Activated T-helper 2 cell treated with anti-CD3 and anti-CD28 coated beads, Interferon-gamma antibody, Interleukin-2, Interleukin-4, amounts not matched to agents 10 μg/mL and 5 μg/mL and 100 μg/mL, durations not matched to agents 14 hours and 24 hours and 36 hours (primary cell): ENCODE measurements at regions of chr10 and their contacts with region 1.

Region 1: DNA sequence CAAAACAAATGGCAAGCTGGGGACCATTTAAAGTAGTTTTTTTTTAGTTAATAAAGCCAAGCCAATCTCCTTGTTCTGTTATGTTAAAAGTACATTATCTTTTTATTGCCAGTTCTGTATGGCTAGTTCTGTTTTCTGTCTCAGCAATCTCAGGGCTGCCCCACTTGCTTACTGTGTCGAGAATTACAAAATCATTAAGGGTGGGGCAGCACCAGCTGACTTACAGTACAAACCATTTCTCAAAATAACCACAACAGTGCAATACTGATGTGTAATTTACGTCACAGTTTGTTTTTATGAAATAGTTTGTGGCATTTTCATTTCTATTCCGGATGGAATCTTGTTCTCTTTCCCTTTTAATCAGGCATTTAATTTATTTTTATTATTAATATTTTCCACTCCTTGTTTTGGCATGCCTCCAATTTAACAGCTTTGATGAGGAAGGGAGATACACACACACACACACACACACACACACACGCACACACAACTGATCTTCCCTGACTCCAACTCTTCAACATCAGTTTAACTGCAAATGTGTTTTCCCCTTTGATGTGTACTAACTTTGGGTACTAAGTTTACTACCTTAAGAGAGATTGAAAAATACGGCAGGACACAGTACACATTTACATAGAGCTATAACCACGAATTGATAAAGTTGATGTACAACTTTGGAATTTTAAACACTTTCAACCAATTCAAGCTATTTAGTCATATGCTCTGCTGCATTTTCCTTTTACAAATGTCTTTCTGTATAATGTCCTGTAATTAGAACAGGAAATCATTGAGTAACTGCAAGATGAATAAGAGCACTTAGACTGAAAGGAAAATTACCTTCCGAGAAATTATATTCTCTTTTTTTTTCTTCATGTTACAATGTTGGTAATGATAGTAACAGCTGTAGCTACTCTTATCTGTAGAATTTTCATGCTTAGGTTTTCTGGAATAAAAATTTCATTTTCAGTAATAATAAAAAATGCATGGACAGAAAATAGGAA is 91.5 kb downstream of the ARID5B start:
- DNase-seq: peak; percentile 49
- H3K4me3 Mint-ChIP-seq: peak overlapping the region; percentile 73
- H3K27ac Mint-ChIP-seq: peak overlapping the region; percentile 88
- H3K4me1 Mint-ChIP-seq: peaks cover 68% of the 10 kb centered on the region
- H3K27me3 Mint-ChIP-seq: no peaks in the 10 kb centered on the region

Region 2: GRCh38 chr10:61896854-61897661 is 95.9 kb before region 1 on chr10:
- intact Hi-C with region 1: loop called (anchors 1 kb)
- DNase-seq: peak; percentile 56
- H3K4me3 Mint-ChIP-seq: peak overlapping the region; percentile 73
- H3K27ac Mint-ChIP-seq: peak overlapping the region; percentile 83
- H3K4me1 Mint-ChIP-seq: peaks cover 42% of the 10 kb centered on the region
- H3K27me3 Mint-ChIP-seq: no peaks in the 10 kb centered on the region

Region 3: DNA sequence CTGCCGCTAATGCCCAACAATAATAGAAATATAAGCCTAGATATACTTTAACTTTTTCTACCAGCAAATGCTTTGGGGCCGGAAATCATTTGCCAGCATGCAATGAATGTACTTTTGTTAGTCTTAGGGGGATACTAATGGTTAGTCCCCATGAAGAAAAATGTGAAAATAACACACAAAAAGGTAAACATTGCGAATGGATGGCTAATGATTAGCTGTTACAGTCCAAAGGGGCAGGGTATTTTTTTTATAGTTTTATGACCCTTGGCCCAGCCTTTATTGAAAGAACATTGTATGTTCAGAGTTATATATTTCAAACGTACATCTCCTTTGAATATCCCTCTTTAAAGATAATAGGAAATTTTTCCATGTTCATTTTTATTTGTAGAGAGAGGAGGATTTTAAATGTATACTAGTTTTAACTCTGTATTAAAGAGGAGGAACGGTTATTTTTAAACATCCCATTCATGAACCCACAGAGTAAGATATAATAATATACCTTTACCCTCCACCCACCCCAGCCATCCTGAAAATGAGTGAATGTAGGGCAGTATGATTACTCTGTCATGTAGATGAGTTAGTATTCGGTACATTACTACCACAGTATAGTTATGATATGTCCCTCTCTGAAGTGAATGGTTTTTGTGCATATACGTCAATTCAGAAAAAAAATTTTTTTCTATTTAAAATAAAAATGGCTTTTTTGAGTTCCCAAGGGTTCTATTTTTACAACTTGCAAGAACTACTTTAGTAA is 27.8 kb before region 1 on chr10:
- intact Hi-C with region 1: loop called (anchors 1 kb)
- DNase-seq: no peak
- H3K4me3 Mint-ChIP-seq: no peak overlapping the region
- H3K27ac Mint-ChIP-seq: peak overlapping the region; percentile 76
- H3K4me1 Mint-ChIP-seq: peaks cover 76% of the 10 kb centered on the region
- H3K27me3 Mint-ChIP-seq: no peaks in the 10 kb centered on the region